K562 (cell line): ENCODE measurements at regions of chr6 and their contacts with region 1.

Region 1: GRCh38 chr6:26216356-26216885 is 129.2 kb downstream of the HFE start:
- DNase-seq: peak; percentile 83 to 98 (median 90)
- ATAC-seq: peak; percentile 69
- H3K4me3 ChIP-seq: peak overlapping the region; percentile 61
- H3K27ac ChIP-seq: peak overlapping the region; percentile 91
- H3K4me1 ChIP-seq: peaks cover 15 to 23% of the 10 kb centered on the region in 2 experiments
- H3K27me3 ChIP-seq: no peaks in the 10 kb centered on the region
- CTCF ChIP-seq: no peak; a peak in 1 of 6 replicates
- EP300 ChIP-seq: no peak
- POLR2A ChIP-seq: peak; percentile 100
- RAD21 ChIP-seq: no peak; a peak in 1 of 4 replicates

Region 2: GRCh38 chr6:26003102-26003694 is 213.2 kb before region 1 on chr6:
- CTCF ChIA-PET with region 1: no interaction called
- POLR2A ChIA-PET with region 1: no interaction called
- in situ Hi-C with region 1: no loop called
- intact Hi-C with region 1: no loop called
- DNase-seq: peak; percentile 75 to 81 (median 76)
- ATAC-seq: peak; percentile 87
- H3K4me3 ChIP-seq: no peak overlapping the region
- H3K27ac ChIP-seq: no peak overlapping the region
- H3K4me1 ChIP-seq: peaks cover 5 to 10% of the 10 kb centered on the region in 2 experiments; a peak in 4 of 5 replicates
- H3K27me3 ChIP-seq: no peaks in the 10 kb centered on the region
- CTCF ChIP-seq: peak; percentile 77 to 87 (median 87)
- EP300 ChIP-seq: no peak
- POLR2A ChIP-seq: no peak
- RAD21 ChIP-seq: peak; percentile 64 to 77

Region 3: GRCh38 chr6:26122793-26123674 is 93.4 kb before region 1 on chr6:
- CTCF ChIA-PET with region 1: no interaction called
- POLR2A ChIA-PET with region 1: interaction called, 146 read pairs
- in situ Hi-C with region 1: no loop called
- intact Hi-C with region 1: loop called (anchors 1 kb)
- DNase-seq: peak; percentile 79 to 99 (median 86)
- ATAC-seq: peak; percentile 62
- H3K4me3 ChIP-seq: peak overlapping the region; percentile 72
- H3K27ac ChIP-seq: peak overlapping the region; percentile 95
- H3K4me1 ChIP-seq: peaks cover 3 to 7% of the 10 kb centered on the region in 2 experiments; a peak in 4 of 5 replicates
- H3K27me3 ChIP-seq: no peaks in the 10 kb centered on the region
- CTCF ChIP-seq: peak in 1 of 3 experiments; percentile 23; a peak in 1 of 6 replicates
- EP300 ChIP-seq: peak; percentile 99
- POLR2A ChIP-seq: no peak; the same call in none of the 2 replicates
- RAD21 ChIP-seq: 0 out of 4 replicates have a peak, but pooled peaks of 1 of the 2 experiments have one; percentile 6

Region 4: GRCh38 chr6:26149240-26149639 is 67.2 kb before region 1 on chr6:
- CTCF ChIA-PET with region 1: no interaction called
- POLR2A ChIA-PET with region 1: no interaction called
- in situ Hi-C with region 1: no loop called
- intact Hi-C with region 1: no loop called
- DNase-seq: no peak
- ATAC-seq: no peak
- H3K4me3 ChIP-seq: no peak overlapping the region
- H3K27ac ChIP-seq: no peak overlapping the region
- H3K4me1 ChIP-seq: peaks cover 0 to 4% of the 10 kb centered on the region in 2 experiments; a peak in 2 of 5 replicates
- H3K27me3 ChIP-seq: no peaks in the 10 kb centered on the region
- CTCF ChIP-seq: no peak
- EP300 ChIP-seq: no peak
- POLR2A ChIP-seq: no peak
- RAD21 ChIP-seq: no peak

Region 5: DNA sequence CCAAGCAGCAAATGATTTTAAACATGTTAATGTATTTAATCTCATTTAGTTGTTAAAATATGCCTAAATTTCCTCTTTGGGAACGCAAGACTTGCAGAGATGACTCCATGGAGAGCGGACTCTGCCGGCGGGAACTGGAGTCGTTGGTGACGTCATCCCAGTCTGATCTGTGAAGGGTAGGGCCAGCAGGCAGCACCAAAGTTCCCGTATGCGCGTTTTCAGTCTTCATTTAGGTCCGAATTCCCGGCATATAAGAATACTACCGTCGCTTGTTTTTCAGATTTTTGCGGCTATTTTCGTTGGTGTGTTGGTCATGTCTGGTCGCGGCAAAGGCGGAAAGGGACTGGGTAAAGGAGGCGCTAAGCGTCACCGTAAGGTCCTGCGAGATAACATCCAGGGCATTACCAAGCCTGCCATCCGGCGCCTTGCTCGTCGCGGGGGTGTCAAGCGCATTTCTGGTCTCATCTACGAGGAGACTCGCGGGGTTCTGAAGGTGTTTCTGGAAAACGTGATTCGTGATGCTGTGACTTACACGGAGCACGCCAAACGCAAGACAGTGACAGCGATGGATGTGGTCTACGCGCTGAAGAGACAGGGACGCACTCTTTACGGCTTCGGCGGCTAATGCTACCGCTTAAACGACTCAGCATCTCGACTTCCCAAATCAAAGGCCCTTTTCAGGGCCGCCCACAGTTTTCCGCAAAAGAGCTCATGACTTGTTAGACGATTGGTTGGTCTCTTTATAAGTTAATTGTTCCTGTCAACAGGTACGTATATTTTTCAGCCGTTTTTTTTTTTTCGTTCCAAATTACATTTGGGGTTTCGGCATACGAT is 11.9 kb before region 1 on chr6:
- CTCF ChIA-PET with region 1: interaction called, 5 read pairs
- POLR2A ChIA-PET with region 1: interaction called, 1,095 read pairs
- in situ Hi-C with region 1: no loop called
- intact Hi-C with region 1: loop called (anchors 1 kb)
- DNase-seq: peak; percentile 85 to 99 (median 92)
- ATAC-seq: peak; percentile 67
- H3K4me3 ChIP-seq: peak overlapping the region; percentile 57
- H3K27ac ChIP-seq: peak overlapping the region; percentile 99
- H3K4me1 ChIP-seq: peaks cover 9 to 21% of the 10 kb centered on the region in 2 experiments; a peak in 4 of 5 replicates
- H3K27me3 ChIP-seq: no peaks in the 10 kb centered on the region
- CTCF ChIP-seq: peak in 2 of 3 experiments; percentile 67 to 70; a peak in 5 of 6 replicates
- EP300 ChIP-seq: peak; percentile 95
- POLR2A ChIP-seq: peak; percentile 100
- RAD21 ChIP-seq: peak in 1 of 2 experiments; percentile 29; a peak in 2 of 4 replicates

Region 6: GRCh38 chr6:26285143-26286134 is 69.0 kb after region 1 on chr6:
- CTCF ChIA-PET with region 1: no interaction called
- POLR2A ChIA-PET with region 1: interaction called, 194 read pairs
- in situ Hi-C with region 1: no loop called
- intact Hi-C with region 1: loop called (anchors 1 kb)
- DNase-seq: peak; percentile 89 to 100 (median 92)
- ATAC-seq: peak; percentile 84
- H3K4me3 ChIP-seq: peak overlapping the region; percentile 50
- H3K27ac ChIP-seq: peak overlapping the region; percentile 97
- H3K4me1 ChIP-seq: peaks cover 11 to 19% of the 10 kb centered on the region in 2 experiments; a peak in 4 of 5 replicates
- H3K27me3 ChIP-seq: no peaks in the 10 kb centered on the region
- CTCF ChIP-seq: peak in 1 of 3 experiments; percentile 5; a peak in 2 of 6 replicates
- EP300 ChIP-seq: peak; percentile 96
- POLR2A ChIP-seq: peak; percentile 99
- RAD21 ChIP-seq: peak in 1 of 2 experiments; percentile 41; a peak in 3 of 4 replicates

Region 7: DNA sequence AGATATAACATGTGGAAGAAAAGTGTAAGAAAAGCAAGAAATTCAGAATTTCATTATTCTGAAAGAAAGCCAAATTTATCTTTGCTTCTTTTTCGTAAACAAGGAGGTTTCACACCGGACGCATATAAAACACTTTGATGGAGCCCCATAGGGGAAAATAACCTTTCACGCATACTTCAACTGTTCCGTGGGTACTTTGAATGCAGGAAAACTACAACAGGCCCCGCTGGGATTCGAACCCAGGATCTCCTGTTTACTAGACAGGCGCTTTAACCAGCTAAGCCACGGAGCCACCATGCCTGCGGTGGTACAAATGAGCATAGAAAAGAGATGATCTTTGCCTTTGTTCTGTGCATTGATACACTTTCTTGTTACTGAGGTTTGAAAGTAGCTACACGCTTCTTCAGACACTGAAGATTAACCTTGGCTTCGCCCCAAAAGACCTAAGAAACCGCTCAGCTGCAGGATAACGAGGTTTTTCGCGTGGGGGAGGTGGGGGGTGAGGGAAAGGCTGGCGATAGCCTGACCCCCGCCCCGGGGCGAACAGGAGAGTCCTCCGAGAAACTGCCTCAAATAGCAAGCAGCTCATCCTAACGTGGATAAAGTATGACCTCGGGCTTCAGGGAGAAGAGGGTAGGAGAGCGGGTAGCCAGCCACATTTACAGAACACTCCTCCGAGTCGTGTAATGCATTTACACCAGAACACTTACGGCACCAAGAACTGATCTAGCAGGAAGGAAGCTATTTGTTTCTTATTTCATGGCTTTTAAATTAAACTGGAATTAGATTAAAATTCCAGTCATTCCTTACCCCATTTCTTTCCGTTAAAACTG is 316.5 kb after region 1 on chr6:
- CTCF ChIA-PET with region 1: no interaction called
- POLR2A ChIA-PET with region 1: interaction called, 21 read pairs
- in situ Hi-C with region 1: no loop called
- intact Hi-C with region 1: no loop called
- DNase-seq: peak; percentile 74 to 97 (median 80)
- ATAC-seq: peak; percentile 72
- H3K4me3 ChIP-seq: peak overlapping the region; percentile 74
- H3K27ac ChIP-seq: peak overlapping the region; percentile 77
- H3K4me1 ChIP-seq: peaks cover 9 to 19% of the 10 kb centered on the region in 2 experiments
- H3K27me3 ChIP-seq: no peaks in the 10 kb centered on the region
- CTCF ChIP-seq: peak in 1 of 3 experiments; percentile 9; a peak in 1 of 6 replicates
- EP300 ChIP-seq: peak; percentile 82
- POLR2A ChIP-seq: no peak
- RAD21 ChIP-seq: peak; percentile 12 to 15; a peak in 1 of 4 replicates

Region 8: DNA sequence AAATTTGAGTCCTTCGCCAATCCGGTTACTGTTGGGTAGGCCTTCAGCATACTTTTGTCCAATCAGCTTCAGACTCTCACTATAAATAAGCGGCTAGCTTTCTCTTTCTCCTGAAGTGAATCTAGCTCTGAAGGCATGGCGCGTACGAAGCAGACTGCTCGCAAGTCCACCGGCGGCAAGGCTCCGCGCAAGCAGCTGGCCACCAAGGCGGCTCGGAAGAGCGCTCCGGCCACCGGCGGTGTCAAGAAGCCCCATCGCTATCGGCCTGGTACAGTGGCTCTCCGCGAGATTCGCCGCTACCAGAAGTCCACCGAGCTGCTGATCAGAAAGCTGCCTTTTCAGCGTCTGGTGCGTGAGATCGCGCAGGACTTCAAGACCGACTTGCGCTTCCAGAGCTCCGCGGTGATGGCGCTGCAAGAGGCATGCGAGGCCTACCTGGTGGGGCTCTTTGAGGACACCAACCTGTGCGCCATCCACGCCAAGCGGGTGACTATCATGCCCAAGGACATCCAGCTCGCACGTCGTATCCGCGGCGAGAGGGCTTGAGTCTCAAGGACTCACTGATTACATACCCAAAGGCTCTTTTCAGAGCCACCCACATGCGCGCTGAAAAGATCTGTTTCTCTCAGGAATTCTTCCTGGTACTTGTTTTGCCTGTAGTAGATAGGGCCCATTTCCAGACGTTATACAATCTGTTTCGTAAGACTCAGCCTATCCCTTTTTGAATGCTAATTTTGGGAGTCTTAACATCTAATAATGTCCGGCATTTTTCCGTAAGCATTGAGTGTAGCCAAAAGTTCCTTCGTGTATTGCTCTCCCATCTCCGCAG is 1593.7 kb after region 1 on chr6:
- CTCF ChIA-PET with region 1: no interaction called
- POLR2A ChIA-PET with region 1: interaction called, 12 read pairs
- in situ Hi-C with region 1: loop called (anchors 25 kb)
- intact Hi-C with region 1: no loop called
- DNase-seq: peak; percentile 70 to 96 (median 82)
- ATAC-seq: peak; percentile 60
- H3K4me3 ChIP-seq: peak overlapping the region; percentile 71
- H3K27ac ChIP-seq: peak overlapping the region; percentile 86
- H3K4me1 ChIP-seq: peaks cover 4 to 20% of the 10 kb centered on the region in 2 experiments; a peak in 4 of 5 replicates
- H3K27me3 ChIP-seq: no peaks in the 10 kb centered on the region
- CTCF ChIP-seq: peak in 2 of 3 experiments; percentile 25 to 36; a peak in 3 of 6 replicates
- EP300 ChIP-seq: 0 out of 2 replicates have a peak, but pooled peaks have one; percentile 2
- POLR2A ChIP-seq: peak; percentile 100
- RAD21 ChIP-seq: peak; percentile 10 to 35; a peak in 2 of 4 replicates